Dorsolateral prefrontal cortex (tissue), 120 donors: ENCODE measurements at regions of chr10 and their contacts with region 1.

Region 1: DNA sequence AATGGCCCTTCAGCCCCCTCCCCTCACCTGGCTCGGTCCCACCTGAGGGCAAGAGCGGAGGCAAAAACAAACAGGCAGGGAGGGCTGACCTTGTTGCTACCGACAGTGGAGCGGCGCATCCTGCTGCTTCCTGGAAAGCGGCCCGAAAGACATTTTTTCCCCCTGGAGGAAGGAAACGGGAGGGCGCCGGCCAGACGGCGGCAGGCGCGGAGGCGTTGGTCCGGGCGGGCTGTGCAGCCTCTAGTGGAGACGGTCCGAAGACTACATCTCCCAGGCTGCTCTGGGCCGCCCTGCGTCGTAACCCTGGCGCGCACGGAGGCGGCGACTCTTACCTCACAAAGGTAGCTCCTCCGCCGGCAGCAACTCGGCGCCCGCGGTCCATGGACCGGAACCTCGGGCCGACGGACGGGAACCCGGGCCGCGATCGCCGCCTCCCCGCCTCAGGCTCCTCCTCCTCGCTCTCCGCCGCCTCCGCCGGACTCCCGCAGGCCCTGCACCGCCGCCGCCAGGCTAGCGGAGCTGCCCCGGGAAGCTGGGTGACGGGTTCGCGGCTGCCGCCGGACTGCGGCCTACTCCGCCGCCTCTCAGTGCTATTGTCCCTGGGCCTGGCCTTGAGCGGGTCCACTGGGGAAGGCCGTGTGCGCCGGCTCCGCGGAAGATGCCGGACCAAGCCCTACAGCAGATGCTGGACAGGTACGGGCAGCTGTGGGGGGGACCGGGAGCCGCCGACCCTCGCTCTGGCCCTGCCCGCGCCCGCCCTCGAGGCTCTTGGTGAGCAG is at the starts of genes CPEB3 and MARCHF5:
- DNase-seq: peak; percentile 89 to 97 (median 96)
- H3K4me3 ChIP-seq: peak within 1 kb of the TSS; percentile 72 to 100 (median 97)
- H3K27ac ChIP-seq: peak within 1 kb of the TSS; percentile 47 to 97 (median 92)
- H3K27me3 ChIP-seq: no peaks in the 10 kb centered on the region
- CTCF ChIP-seq: peak; percentile 31 to 75 (median 62)
- total RNA-seq, gene CPEB3: 22.9 to 71.6 (median 53.0) TPM
- total RNA-seq, gene MARCHF5: 20.9 to 46.0 (median 34.0) TPM

Region 2: GRCh38 chr10:91797874-91798648 is 493.0 kb before region 1 on chr10 and contains the start of gene TNKS2:
- intact Hi-C with region 1: loop called in 1 of 2 experiments (anchors 5 kb)
- DNase-seq: peak; percentile 77 to 94 (median 87)
- H3K4me3 ChIP-seq: peak within 1 kb of the TSS; percentile 50 to 99 (median 92)
- H3K27ac ChIP-seq: peak within 1 kb of the TSS; percentile 52 to 99 (median 91)
- H3K27me3 ChIP-seq: no peaks in the 10 kb centered on the region
- CTCF ChIP-seq: peak in 38 of 56 donors; percentile 9 to 66 (median 30)
- total RNA-seq, gene TNKS2: 35.0 to 51.5 (median 43.0) TPM

Region 3: DNA sequence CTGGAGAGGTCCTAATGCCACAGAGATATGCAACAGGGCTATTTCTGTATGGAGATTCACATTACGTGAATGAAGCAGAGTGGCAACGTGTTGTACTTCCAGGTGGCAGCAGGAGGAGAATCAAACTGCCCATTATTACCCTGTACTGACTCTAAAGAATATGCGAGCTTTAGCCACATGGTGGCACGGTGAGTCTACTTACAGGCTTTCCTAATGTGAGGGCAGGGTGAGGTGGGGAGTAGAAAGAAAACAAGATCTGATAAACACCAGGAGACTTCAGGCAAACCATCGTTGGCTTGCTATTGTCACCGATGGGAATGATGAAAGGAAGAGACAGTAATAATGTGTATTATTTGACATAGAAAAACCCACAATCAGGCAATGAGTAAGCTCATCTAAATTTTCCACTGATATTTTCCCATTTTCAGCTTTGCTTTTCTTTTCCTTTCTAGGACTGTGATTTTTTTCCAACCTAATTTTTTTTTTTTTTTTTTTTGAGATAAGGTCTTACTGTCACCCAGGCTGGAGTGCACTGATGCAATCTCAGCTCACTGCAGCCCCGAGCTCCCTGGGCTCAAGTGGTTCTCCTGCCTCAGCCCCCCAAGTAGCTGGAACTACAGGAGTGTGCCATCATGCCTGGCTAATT is 203.2 kb before region 1 on chr10:
- intact Hi-C with region 1: loop called (anchors 5 kb)
- DNase-seq: peak in 8 of 10 donors; percentile 47 to 84 (median 56)
- H3K4me3 ChIP-seq: no peak overlapping the region
- H3K27ac ChIP-seq: peak overlapping the region in 21 of 59 donors; percentile 0 to 48 (median 24)
- H3K27me3 ChIP-seq: no peaks in the 10 kb centered on the region
- CTCF ChIP-seq: peak; percentile 9 to 91 (median 76)

Region 4: DNA sequence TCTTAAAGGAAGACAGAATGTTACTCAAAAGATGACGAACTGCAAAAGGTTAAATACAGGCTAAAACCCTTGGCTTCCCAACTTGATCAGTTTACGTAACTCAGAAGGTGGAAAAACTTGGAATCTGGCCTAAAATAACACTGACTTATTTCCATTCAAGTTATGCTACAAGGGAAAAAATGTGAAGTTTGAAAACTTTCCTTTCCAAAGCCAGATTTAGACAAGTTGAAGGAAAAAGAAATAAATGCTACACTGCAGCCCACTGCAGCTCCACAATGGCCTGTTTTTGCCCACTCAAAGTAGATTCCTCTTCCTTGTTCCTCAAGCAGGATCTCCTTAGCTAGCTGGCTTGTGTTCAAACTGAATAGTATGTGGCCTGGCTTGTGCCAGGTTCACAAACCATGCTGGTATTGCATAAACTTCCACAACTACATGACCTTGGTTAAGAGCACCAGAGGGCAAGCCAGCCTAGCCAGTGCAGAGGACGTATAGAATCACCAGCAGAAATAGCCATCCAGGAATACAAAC is 166.3 kb before region 1 on chr10:
- intact Hi-C with region 1: no loop called
- DNase-seq: no peak
- H3K4me3 ChIP-seq: no peak overlapping the region
- H3K27ac ChIP-seq: peak overlapping the region in 34 of 59 donors; percentile 2 to 77 (median 33)
- H3K27me3 ChIP-seq: no peaks in the 10 kb centered on the region
- CTCF ChIP-seq: no peak

Region 5: GRCh38 chr10:92240289-92241157 is 50.5 kb before region 1 on chr10:
- intact Hi-C with region 1: loop called (anchors 1 to 2 kb)
- DNase-seq: peak in 9 of 10 donors; percentile 53 to 80 (median 60)
- H3K4me3 ChIP-seq: peak overlapping the region; percentile 60 to 94 (median 81)
- H3K27ac ChIP-seq: peak overlapping the region; percentile 87 to 99 (median 97)
- H3K27me3 ChIP-seq: no peaks in the 10 kb centered on the region
- CTCF ChIP-seq: peak in 5 of 56 donors; percentile 0 to 27 (median 13)

Region 6: DNA sequence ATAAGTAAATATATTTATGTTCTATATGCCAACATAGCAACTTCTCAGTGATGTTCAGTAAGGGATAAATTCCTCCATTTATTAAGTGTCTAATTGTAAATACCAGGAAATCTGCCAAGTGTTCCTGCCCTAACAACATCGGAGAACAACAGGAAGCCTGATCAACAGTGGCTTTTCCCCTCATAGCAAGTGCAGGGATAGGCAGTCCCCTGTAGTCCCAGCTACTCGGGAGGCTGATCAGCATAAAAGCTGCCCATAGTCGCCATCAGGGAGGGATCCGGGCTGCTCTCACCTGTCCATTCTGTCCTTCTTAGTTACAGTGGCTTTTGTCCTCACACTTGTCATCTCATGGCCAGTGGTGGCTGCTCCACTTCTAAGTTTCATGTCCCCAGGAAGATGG is 141.6 kb after region 1 on chr10:
- intact Hi-C with region 1: loop called in 1 of 2 experiments (anchors 5 kb)
- DNase-seq: no peak
- H3K4me3 ChIP-seq: no peak overlapping the region
- H3K27ac ChIP-seq: no peak overlapping the region
- H3K27me3 ChIP-seq: no peaks in the 10 kb centered on the region
- CTCF ChIP-seq: no peak